Activated B cell treated with CpG ODN at 0.5 μM for 24 hours (primary cell): ENCODE measurements at regions of chr16 and their contacts with region 1.

Region 1: GRCh38 chr16:21061747-21062146 is 88.9 kb downstream of the DNAH3 start:
- DNase-seq: no peak
- ATAC-seq: no peak
- H3K4me3 Mint-ChIP-seq: no peak overlapping the region
- H3K27ac Mint-ChIP-seq: no peak overlapping the region
- H3K4me1 Mint-ChIP-seq: no peaks in the 10 kb centered on the region
- H3K27me3 Mint-ChIP-seq: peaks cover 7% of the 10 kb centered on the region
- CTCF ChIP-seq: no peak

Region 2: GRCh38 chr16:22418826-22419225 is 1357.1 kb after region 1 on chr16:
- CTCF ChIA-PET with region 1: no interaction called
- POLR2A ChIA-PET with region 1: interaction called, 16 read pairs
- intact Hi-C with region 1: no loop called
- DNase-seq: no peak
- ATAC-seq: no peak
- H3K4me3 Mint-ChIP-seq: no peak overlapping the region
- H3K27ac Mint-ChIP-seq: no peak overlapping the region
- H3K4me1 Mint-ChIP-seq: no peaks in the 10 kb centered on the region
- H3K27me3 Mint-ChIP-seq: no peaks in the 10 kb centered on the region
- CTCF ChIP-seq: no peak